Endothelial cell of umbilical vein (primary cell): ENCODE measurements at regions of chr12 and their contacts with region 1.

Region 1: GRCh38 chr12:40152783-40153383 is 47.0 kb upstream of the SLC2A13 start:
- DNase-seq: peak; percentile 68
- H3K4me3 ChIP-seq: no peak overlapping the region
- H3K27ac ChIP-seq: no peak overlapping the region
- H3K4me1 ChIP-seq: peaks cover 4% of the 10 kb centered on the region
- H3K27me3 ChIP-seq: no peaks in the 10 kb centered on the region
- CTCF ChIP-seq: peak; percentile 55 to 68
- POLR2A ChIP-seq: no peak

Region 2: GRCh38 chr12:40224439-40225291 is 71.8 kb after region 1 on chr12 and contains the start of gene LRRK2:
- CTCF ChIA-PET with region 1: interaction called, 4 read pairs
- POLR2A ChIA-PET with region 1: no interaction called
- dilution Hi-C with region 1: no loop called
- intact Hi-C with region 1: loop called (anchors 2 kb)
- DNase-seq: peak; percentile 55
- H3K4me3 ChIP-seq: peak within 1 kb of the TSS; percentile 5 to 67 (median 42)
- H3K27ac ChIP-seq: peak within 1 kb of the TSS; percentile 17
- H3K4me1 ChIP-seq: peaks cover 20% of the 10 kb centered on the region
- H3K27me3 ChIP-seq: no peaks in the 10 kb centered on the region
- CTCF ChIP-seq: no peak
- POLR2A ChIP-seq: no peak
- total RNA-seq, gene LRRK2: 1.3 and 2.2 TPM in 2 replicates

Region 3: DNA sequence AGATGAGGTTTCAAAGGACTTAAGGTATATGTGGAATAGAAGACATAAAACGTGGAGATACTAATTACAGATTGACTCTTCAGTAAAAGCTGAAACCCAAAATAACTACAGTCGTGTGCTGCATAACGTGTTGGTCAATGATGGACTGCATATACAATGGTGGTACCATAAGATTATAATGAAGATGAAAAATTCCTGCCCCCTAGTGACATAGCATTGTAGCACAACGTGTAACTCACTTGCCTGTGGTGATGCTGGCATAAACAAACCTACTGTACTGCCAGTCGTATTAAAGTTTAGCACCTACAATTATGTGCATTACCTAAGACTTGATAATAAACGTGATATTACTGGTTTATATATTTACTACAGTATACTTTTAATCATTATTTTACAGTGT is 222.2 kb after region 1 on chr12:
- CTCF ChIA-PET with region 1: no interaction called
- POLR2A ChIA-PET with region 1: no interaction called
- dilution Hi-C with region 1: no loop called
- intact Hi-C with region 1: loop called (anchors 2 kb)
- DNase-seq: peak; percentile 38
- H3K4me3 ChIP-seq: no peak overlapping the region
- H3K27ac ChIP-seq: no peak overlapping the region
- H3K4me1 ChIP-seq: no peaks in the 10 kb centered on the region
- H3K27me3 ChIP-seq: no peaks in the 10 kb centered on the region
- CTCF ChIP-seq: peak in 1 of 2 donors; percentile 27
- POLR2A ChIP-seq: no peak